Gastrocnemius medialis (tissue), 4 donors: ENCODE measurements at regions of chr3 and their contacts with region 1.

Region 1: GRCh38 chr3:188954590-188955208 is 217.1 kb upstream of the TPRG1 start:
- DNase-seq: peak; percentile 73 to 85
- ATAC-seq: peak; percentile 77 to 87
- H3K4me3 ChIP-seq: no peak overlapping the region
- H3K27ac ChIP-seq: peak overlapping the region; percentile 50 to 76 (median 66)
- H3K4me1 ChIP-seq: peaks cover 41 to 42% of the 10 kb centered on the region in 2 donors
- H3K27me3 ChIP-seq: no peaks in the 10 kb centered on the region
- CTCF ChIP-seq: peak; percentile 93 to 96 (median 94)
- POLR2A ChIP-seq: no peak

Region 2: DNA sequence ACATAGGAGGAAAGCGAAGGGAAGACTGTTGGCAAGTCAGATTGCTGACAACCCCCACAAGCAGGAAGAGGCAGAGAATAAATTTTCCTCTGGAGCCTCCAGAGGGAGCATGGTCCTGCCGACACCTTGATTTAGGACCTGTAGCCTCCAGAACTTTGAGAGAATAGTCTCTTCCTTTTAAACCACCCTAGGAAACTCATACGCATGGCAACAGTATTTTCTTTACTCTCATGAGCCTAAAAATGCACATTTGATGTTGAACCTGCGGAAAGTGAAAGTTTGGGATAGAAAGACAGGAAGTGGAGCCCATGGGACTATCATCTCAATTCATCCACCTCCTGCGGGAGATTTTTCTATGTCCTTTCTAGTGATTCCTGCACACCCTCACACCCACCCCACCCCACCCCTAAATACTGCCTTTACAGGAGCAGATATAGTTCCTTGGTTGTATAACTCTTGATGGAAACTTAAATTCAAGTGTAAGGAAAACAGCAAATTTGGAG is 917.4 kb before region 1 on chr3:
- in situ Hi-C with region 1: loop called in 3 of 4 experiments (anchors 10 to 25 kb)
- intact Hi-C with region 1: loop called (anchors 5 kb)
- DNase-seq: peak in 1 of 2 donors; percentile 63
- ATAC-seq: peak; percentile 82 to 96
- H3K4me3 ChIP-seq: peak overlapping the region in 1 of 4 donors; percentile 39
- H3K27ac ChIP-seq: peak overlapping the region in 3 of 4 donors; percentile 1 to 51 (median 30)
- H3K4me1 ChIP-seq: peaks cover 15 to 20% of the 10 kb centered on the region in 2 donors
- H3K27me3 ChIP-seq: no peaks in the 10 kb centered on the region
- CTCF ChIP-seq: peak; percentile 41 to 66 (median 57)
- POLR2A ChIP-seq: no peak

Region 3: GRCh38 chr3:188154014-188154808 is 800.5 kb before region 1 on chr3 and contains the start of gene LPP:
- in situ Hi-C with region 1: loop called in 1 of 4 experiments (anchors 25 kb)
- intact Hi-C with region 1: loop called (anchors 5 kb)
- DNase-seq: peak; percentile 53 to 76
- ATAC-seq: peak; percentile 60 to 70
- H3K4me3 ChIP-seq: peak within 1 kb of the TSS; percentile 61 to 96 (median 83)
- H3K27ac ChIP-seq: peak within 1 kb of the TSS; percentile 93 to 98 (median 98)
- H3K4me1 ChIP-seq: peaks cover 44 to 54% of the 10 kb centered on the region in 2 donors
- H3K27me3 ChIP-seq: no peaks in the 10 kb centered on the region
- CTCF ChIP-seq: no peak
- POLR2A ChIP-seq: peak; percentile 78 to 80
- total RNA-seq, gene LPP: 56.0 to 65.7 (median 58.1) TPM

Region 4: GRCh38 chr3:188294823-188295487 is 659.7 kb before region 1 on chr3:
- in situ Hi-C with region 1: loop called in 1 of 4 experiments (anchors 25 kb)
- intact Hi-C with region 1: no loop called
- DNase-seq: peak; percentile 59 to 60
- ATAC-seq: peak; percentile 98
- H3K4me3 ChIP-seq: peak overlapping the region; percentile 16 to 28 (median 24)
- H3K27ac ChIP-seq: peak overlapping the region; percentile 84 to 89 (median 86)
- H3K4me1 ChIP-seq: peaks cover 44 to 47% of the 10 kb centered on the region in 2 donors
- H3K27me3 ChIP-seq: no peaks in the 10 kb centered on the region
- CTCF ChIP-seq: no peak
- POLR2A ChIP-seq: no peak

Region 5: DNA sequence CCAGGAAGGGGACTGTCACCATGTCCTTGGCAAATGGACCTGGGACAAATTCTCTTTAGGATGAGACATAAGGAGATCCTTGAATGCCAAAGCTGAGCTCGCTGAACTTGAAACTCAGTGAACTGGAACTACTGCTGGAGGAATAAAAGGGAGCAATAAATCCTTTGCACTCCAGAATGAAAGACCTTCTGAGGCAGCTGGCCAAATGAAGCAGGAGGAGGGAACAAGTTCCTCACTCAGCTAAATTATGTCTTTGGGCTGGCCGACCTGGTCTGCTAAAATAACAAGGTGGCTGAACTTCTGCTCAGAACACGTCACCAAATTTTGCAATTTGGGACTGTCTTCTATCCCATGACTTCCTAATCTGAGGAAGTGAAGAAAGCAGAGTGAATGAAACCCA is 486.0 kb before region 1 on chr3:
- in situ Hi-C with region 1: no loop called
- intact Hi-C with region 1: loop called (anchors 5 kb)
- DNase-seq: peak; percentile 59 to 82
- ATAC-seq: peak; percentile 57 to 73
- H3K4me3 ChIP-seq: no peak overlapping the region
- H3K27ac ChIP-seq: peak overlapping the region; percentile 56 to 70 (median 58)
- H3K4me1 ChIP-seq: peaks cover 38 to 43% of the 10 kb centered on the region in 2 donors
- H3K27me3 ChIP-seq: no peaks in the 10 kb centered on the region
- CTCF ChIP-seq: no peak
- POLR2A ChIP-seq: no peak

Region 6: DNA sequence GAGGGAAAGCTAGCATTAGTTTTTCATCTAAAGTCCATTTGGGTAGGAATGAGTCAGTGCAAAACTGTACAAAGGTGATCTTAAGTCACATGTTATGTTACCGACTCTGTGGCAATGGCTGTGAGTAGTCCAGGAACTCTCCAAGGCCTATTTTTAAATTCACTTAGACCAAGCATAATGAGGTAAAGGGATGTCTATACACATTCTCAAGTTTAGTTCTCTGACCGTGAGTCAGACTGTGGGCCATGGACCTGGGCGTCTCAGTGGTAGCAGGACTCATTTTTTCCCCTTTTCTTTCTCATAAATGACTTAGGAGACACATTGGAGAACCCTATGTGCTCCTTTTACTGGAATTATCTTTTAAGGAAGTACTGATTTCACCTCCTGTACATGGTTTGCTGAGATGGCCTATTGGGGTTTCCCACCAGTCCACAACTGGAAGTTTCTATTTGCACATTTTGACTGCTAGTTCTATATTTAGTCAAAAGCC is 271.6 kb before region 1 on chr3:
- in situ Hi-C with region 1: loop called in 1 of 4 experiments (anchors 10 kb)
- intact Hi-C with region 1: no loop called
- DNase-seq: peak; percentile 61 to 73
- ATAC-seq: peak; percentile 99 to 100
- H3K4me3 ChIP-seq: no peak overlapping the region
- H3K27ac ChIP-seq: peak overlapping the region; percentile 73 to 90 (median 78)
- H3K4me1 ChIP-seq: peaks cover 40 to 44% of the 10 kb centered on the region in 2 donors
- H3K27me3 ChIP-seq: no peaks in the 10 kb centered on the region
- CTCF ChIP-seq: no peak
- POLR2A ChIP-seq: peak; percentile 32 to 73

Region 7: GRCh38 chr3:189148081-189148507 is 193.4 kb after region 1 on chr3:
- in situ Hi-C with region 1: loop called in 2 of 4 experiments (anchors 10 kb)
- intact Hi-C with region 1: loop called (anchors 5 kb)
- DNase-seq: peak; percentile 25 to 49
- ATAC-seq: peak; percentile 64 to 76
- H3K4me3 ChIP-seq: no peak overlapping the region
- H3K27ac ChIP-seq: no peak overlapping the region
- H3K4me1 ChIP-seq: peaks cover 7 to 12% of the 10 kb centered on the region in 2 donors
- H3K27me3 ChIP-seq: no peaks in the 10 kb centered on the region
- CTCF ChIP-seq: peak; percentile 56 to 84 (median 80)
- POLR2A ChIP-seq: no peak